Aorta (tissue), 5 donors: ENCODE measurements at regions of chr13 and their contacts with region 1.

Region 1: DNA sequence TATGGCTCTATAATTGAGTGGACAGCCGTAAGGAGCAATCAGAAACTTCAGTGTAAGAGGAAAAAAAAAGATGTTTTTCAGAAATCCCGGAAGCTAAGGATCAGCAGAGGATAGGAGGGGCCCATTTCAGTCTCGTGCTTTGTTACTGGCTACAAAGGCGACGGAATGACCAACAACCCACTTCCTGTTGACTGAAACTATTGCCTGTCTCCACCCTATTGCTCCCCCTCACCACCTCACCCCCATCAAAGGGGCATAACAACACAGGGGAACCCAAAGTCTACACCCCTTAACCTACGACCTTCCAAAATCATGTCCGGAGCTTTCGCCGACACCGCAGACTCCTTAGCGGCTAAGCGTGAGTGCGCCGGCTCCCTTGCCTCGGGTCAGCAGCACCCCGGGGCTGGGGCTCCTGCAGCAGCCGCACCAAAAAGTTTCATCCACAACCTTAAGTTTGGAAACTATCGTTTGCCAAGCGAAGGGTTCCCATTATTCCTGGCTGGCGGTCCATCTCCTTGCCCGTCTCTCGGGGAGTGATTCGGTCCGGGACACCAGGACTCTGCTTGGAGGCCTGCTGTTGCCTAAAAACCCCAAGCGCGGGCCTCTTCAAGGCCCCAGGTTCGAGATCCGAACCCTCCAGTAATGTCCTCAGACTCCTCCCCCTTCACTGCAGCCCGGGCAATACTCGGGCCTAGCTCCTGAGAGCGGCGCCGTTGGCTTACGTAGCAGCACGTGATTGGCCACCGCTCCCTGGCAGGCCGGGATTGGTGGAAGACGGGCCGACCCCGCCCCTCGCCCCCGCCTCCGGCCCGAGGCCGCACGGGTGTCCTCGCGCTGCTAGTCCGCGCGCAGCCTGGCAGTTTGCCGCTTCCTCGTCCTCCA is at the start of gene TPP2:
- DNase-seq: peak; percentile 100
- ATAC-seq: peak; percentile 99
- H3K4me3 ChIP-seq: peak within 1 kb of the TSS; percentile 92 to 99
- H3K27ac ChIP-seq: peak within 1 kb of the TSS; percentile 58 to 99
- H3K4me1 ChIP-seq: peaks cover 1 to 2% of the 10 kb centered on the region in 2 donors
- H3K27me3 ChIP-seq: no peaks in the 10 kb centered on the region
- total RNA-seq, gene TPP2: 36.9 to 44.9 TPM

Region 2: DNA sequence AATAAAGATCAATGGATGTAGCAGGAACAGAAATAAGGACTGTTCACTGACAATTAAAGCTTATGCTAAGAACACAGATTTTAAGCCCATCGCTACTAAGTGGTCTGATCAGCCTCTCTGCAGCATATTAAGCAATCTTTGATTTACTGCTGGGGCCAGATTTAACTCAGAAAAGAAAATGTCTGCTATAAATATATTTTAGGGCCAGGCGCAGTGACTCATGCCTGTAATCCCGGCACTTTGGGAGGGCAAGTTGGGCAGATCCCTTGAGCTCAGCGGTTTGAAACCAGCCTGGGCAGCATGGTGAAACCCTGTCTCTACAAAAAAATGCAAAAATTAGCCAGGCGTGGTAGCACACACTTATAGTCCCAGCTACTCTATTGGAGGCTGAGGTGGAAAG is 55.5 kb after region 1 on chr13:
- intact Hi-C with region 1: loop called in 1 of 2 experiments (anchors 5 kb)
- DNase-seq: peak in 1 of 2 donors; percentile 77
- ATAC-seq: peak; percentile 70
- H3K4me3 ChIP-seq: no peak overlapping the region
- H3K27ac ChIP-seq: no peak overlapping the region
- H3K4me1 ChIP-seq: no peaks in the 10 kb centered on the region
- H3K27me3 ChIP-seq: no peaks in the 10 kb centered on the region

Region 3: GRCh38 chr13:102773441-102774215 is 177.2 kb after region 1 on chr13 and contains the start of gene TEX30:
- intact Hi-C with region 1: loop called (anchors 5 to 10 kb)
- DNase-seq: peak; percentile 89 to 95
- ATAC-seq: peak; percentile 99
- H3K4me3 ChIP-seq: peak within 1 kb of the TSS; percentile 66 to 73
- H3K27ac ChIP-seq: peak within 1 kb of the TSS in 1 of 2 donors; percentile 70
- H3K4me1 ChIP-seq: no peaks in the 10 kb centered on the region
- H3K27me3 ChIP-seq: no peaks in the 10 kb centered on the region
- total RNA-seq, gene TEX30: 5.0 to 7.5 TPM

Region 4: GRCh38 chr13:102800145-102801041 is 204.0 kb after region 1 on chr13:
- intact Hi-C with region 1: loop called in 1 of 2 experiments (anchors 2 kb)
- DNase-seq: peak; percentile 87 to 94
- ATAC-seq: peak; percentile 90
- H3K4me3 ChIP-seq: peak overlapping the region; percentile 65 to 66
- H3K27ac ChIP-seq: peak overlapping the region; percentile 14 to 59
- H3K4me1 ChIP-seq: no peaks in the 10 kb centered on the region
- H3K27me3 ChIP-seq: no peaks in the 10 kb centered on the region

Region 5: DNA sequence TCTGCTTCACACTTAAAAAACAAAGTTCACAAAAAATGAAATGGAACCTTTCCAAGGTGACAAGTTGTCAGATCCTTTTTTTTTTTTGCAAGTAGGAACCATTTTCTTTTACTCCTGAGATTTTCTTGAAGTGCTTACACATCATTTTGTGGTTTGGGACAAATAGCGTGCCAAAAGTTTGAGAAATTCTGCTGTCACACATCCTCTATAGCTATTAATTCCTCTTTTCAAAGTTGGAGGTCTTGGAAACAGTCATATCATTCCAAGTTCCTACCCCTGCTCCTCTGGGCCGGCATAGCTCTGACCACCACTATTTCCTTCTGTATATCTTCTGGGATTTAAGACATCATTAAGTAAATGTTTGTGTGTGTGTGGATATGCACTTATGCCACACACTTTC is 891.5 kb after region 1 on chr13:
- intact Hi-C with region 1: no loop called
- DNase-seq: no peak
- ATAC-seq: no peak
- H3K4me3 ChIP-seq: no peak overlapping the region
- H3K27ac ChIP-seq: no peak overlapping the region
- H3K4me1 ChIP-seq: no peaks in the 10 kb centered on the region
- H3K27me3 ChIP-seq: no peaks in the 10 kb centered on the region